K562 (cell line): ENCODE measurements at regions of chr20 and their contacts with region 1.

Region 1: GRCh38 chr20:4014031-4014474 is 1.3 kb downstream of the RNF24 start:
- DNase-seq: peak in 3 of 4 experiments; percentile 12 to 80 (median 37)
- ATAC-seq: peak; percentile 74
- H3K4me3 ChIP-seq: peak overlapping the region; percentile 95
- H3K27ac ChIP-seq: peak overlapping the region; percentile 78
- H3K4me1 ChIP-seq: peaks cover 37 to 41% of the 10 kb centered on the region in 2 experiments
- H3K27me3 ChIP-seq: no peaks in the 10 kb centered on the region; a peak in 1 of 5 replicates
- CTCF ChIP-seq: peak; percentile 65 to 78 (median 69)
- EP300 ChIP-seq: peak; percentile 47; the same call in 1 of the 2 replicates
- POLR2A ChIP-seq: no peak
- RAD21 ChIP-seq: peak; percentile 76 to 78

Region 2: DNA sequence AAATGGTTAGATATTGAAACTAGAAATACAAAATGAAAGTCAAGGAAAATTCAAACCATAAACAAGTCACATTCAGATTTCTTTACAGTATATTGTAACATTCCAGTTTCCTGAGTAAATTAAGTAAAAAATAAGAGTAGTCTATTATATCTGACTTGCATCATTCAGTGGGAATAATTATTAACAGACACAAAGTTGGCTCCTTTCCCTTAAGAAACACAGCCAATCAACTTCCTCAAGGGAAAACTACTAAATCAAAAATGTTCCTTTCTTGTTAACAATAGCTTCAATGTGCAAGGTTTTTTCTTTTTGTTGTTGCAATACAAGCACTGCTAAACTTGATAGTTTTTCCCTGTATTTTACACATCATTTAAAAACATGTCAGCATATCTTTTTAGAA is 639.8 kb before region 1 on chr20:
- CTCF ChIA-PET with region 1: no interaction called
- POLR2A ChIA-PET with region 1: no interaction called
- in situ Hi-C with region 1: no loop called
- intact Hi-C with region 1: no loop called
- DNase-seq: no peak
- ATAC-seq: no peak
- H3K4me3 ChIP-seq: no peak overlapping the region
- H3K27ac ChIP-seq: no peak overlapping the region
- H3K4me1 ChIP-seq: no peaks in the 10 kb centered on the region
- H3K27me3 ChIP-seq: no peaks in the 10 kb centered on the region
- CTCF ChIP-seq: no peak
- EP300 ChIP-seq: no peak
- POLR2A ChIP-seq: no peak
- RAD21 ChIP-seq: no peak

Region 3: DNA sequence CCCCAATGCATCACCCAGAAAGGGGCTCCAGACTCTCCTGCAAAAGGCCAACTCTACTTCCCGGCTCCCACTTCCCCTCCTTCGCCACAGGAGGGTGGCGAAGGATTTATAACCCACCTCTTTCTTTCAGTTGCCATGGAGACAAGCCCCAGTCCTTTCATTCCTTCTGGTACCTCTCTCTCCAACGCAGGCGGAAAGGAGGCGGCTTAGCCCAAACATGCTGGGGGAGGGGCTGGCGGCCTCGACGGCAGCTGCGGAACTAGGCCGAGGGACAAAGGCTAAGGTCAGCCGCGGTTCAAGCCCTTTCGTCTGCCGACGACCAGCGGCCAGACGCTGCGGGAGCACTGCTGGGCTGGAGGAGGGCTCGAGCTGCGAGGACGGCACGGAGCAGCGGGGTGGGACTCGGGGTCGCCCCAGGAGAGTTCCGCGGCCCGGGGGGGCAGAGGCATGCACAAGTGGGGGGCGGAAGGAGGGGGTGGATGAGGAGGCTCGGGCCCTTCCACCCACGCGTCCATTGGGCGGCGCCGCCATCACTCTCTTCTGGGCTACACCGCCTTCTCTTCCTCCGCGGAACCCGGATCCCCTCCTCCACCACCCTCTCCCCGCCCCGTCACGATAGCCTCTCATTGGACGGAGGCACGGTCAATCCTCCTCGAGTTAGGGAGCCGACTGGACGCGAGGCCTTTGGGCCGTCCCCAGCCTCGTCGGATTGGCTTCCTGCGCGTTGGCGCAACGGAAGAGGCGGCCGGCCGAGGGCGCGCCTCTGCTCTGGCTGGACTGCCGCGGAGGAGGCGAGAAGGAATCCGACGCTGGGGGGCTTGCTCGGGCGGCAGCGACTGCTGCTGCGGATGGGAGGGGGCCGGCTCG is 125.2 kb before region 1 on chr20 and contains the start of gene PANK2:
- CTCF ChIA-PET with region 1: no interaction called
- POLR2A ChIA-PET with region 1: interaction called, 3 read pairs
- in situ Hi-C with region 1: no loop called
- intact Hi-C with region 1: loop called (anchors 2 kb)
- DNase-seq: peak; percentile 93 to 98 (median 95)
- ATAC-seq: peak; percentile 97
- H3K4me3 ChIP-seq: peak within 1 kb of the TSS; percentile 95
- H3K27ac ChIP-seq: peak within 1 kb of the TSS; percentile 94
- H3K4me1 ChIP-seq: peaks cover 9 to 11% of the 10 kb centered on the region in 2 experiments; a peak in 4 of 5 replicates
- H3K27me3 ChIP-seq: no peaks in the 10 kb centered on the region
- CTCF ChIP-seq: peak; percentile 35 to 59 (median 42); a peak in 5 of 6 replicates
- EP300 ChIP-seq: no peak
- POLR2A ChIP-seq: peak; percentile 75
- RAD21 ChIP-seq: peak in 1 of 2 experiments; percentile 46; a peak in 2 of 4 replicates
- polyA plus RNA-seq, gene PANK2: 14.9 to 16.3 TPM

Region 4: DNA sequence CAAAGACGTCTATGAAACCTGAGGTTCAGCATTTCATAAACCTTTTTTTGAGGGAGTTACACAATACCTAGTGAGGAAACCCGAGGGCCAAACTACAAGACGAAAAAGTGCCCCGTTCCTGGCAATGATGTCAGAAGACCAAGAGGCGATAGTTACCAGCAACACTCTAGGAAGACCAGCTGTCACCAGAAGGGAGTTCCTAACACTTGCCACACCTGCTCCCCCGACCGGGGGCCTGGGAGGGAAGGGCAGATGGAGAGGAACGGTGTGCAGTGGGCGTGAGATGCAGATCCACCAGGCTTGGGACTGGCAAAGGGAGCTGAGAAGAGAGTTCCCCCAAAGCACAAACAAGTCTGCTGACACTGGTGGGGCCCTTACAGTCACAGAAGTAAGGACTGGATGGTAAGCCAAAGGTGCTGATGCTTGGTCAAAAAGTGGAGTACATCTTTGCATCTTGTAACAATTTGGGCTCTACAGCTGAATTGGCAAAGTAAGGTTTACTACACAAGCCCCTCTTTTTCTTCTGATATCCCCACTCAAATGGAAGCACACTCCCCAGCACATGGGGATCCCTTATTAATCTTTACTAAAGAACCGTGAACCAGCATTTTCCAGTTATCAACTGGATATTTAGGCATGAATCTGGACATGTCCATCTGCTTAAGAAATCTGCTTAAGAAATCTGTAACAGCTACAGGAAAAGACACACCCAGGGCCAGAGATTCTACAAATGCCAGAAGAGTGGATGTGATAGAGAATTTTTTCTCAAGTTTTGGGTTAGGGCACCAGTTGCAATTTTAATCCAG is 86.4 kb before region 1 on chr20:
- CTCF ChIA-PET with region 1: no interaction called
- POLR2A ChIA-PET with region 1: no interaction called
- in situ Hi-C with region 1: no loop called
- intact Hi-C with region 1: loop called (anchors 5 kb)
- DNase-seq: peak in 1 of 4 experiments; percentile 18
- ATAC-seq: peak; percentile 8
- H3K4me3 ChIP-seq: no peak overlapping the region
- H3K27ac ChIP-seq: no peak overlapping the region
- H3K4me1 ChIP-seq: peaks cover 30 to 31% of the 10 kb centered on the region in 2 experiments; a peak in 4 of 5 replicates
- H3K27me3 ChIP-seq: no peaks in the 10 kb centered on the region
- CTCF ChIP-seq: no peak
- EP300 ChIP-seq: no peak
- POLR2A ChIP-seq: peak; percentile 57
- RAD21 ChIP-seq: no peak

Region 5: GRCh38 chr20:4064144-4064909 is 50.3 kb after region 1 on chr20:
- CTCF ChIA-PET with region 1: no interaction called
- POLR2A ChIA-PET with region 1: interaction called, 4 read pairs
- in situ Hi-C with region 1: loop called (anchors 5 kb)
- intact Hi-C with region 1: no loop called
- DNase-seq: peak; percentile 39 to 76 (median 56)
- ATAC-seq: peak; percentile 78
- H3K4me3 ChIP-seq: no peak overlapping the region
- H3K27ac ChIP-seq: peak overlapping the region; percentile 74
- H3K4me1 ChIP-seq: peaks cover 35 to 58% of the 10 kb centered on the region in 2 experiments
- H3K27me3 ChIP-seq: no peaks in the 10 kb centered on the region
- CTCF ChIP-seq: no peak
- EP300 ChIP-seq: no peak
- POLR2A ChIP-seq: no peak
- RAD21 ChIP-seq: no peak

Region 6: GRCh38 chr20:4076671-4077070 is 62.6 kb after region 1 on chr20:
- CTCF ChIA-PET with region 1: no interaction called
- POLR2A ChIA-PET with region 1: interaction called, 3 read pairs
- in situ Hi-C with region 1: no loop called
- intact Hi-C with region 1: loop called (anchors 1 kb)
- DNase-seq: no peak
- ATAC-seq: no peak
- H3K4me3 ChIP-seq: no peak overlapping the region
- H3K27ac ChIP-seq: peak overlapping the region; percentile 28; the same call in 1 of the 3 replicates
- H3K4me1 ChIP-seq: peaks cover 14 to 55% of the 10 kb centered on the region in 2 experiments
- H3K27me3 ChIP-seq: no peaks in the 10 kb centered on the region
- CTCF ChIP-seq: no peak
- EP300 ChIP-seq: no peak
- POLR2A ChIP-seq: no peak
- RAD21 ChIP-seq: no peak

Region 7: GRCh38 chr20:4084096-4084495 is 70.0 kb after region 1 on chr20:
- CTCF ChIA-PET with region 1: interaction called, 7 read pairs
- POLR2A ChIA-PET with region 1: interaction called, 5 read pairs
- in situ Hi-C with region 1: no loop called
- intact Hi-C with region 1: loop called (anchors 2 kb)
- DNase-seq: no peak
- ATAC-seq: no peak
- H3K4me3 ChIP-seq: no peak overlapping the region
- H3K27ac ChIP-seq: peak overlapping the region; percentile 84
- H3K4me1 ChIP-seq: peaks cover 24 to 44% of the 10 kb centered on the region in 2 experiments
- H3K27me3 ChIP-seq: no peaks in the 10 kb centered on the region
- CTCF ChIP-seq: no peak
- EP300 ChIP-seq: no peak
- POLR2A ChIP-seq: no peak
- RAD21 ChIP-seq: no peak